Activated CD4-positive, alpha-beta T cell treated with anti-CD3 and anti-CD28 coated beads for 36 hours (primary cell): ENCODE measurements at regions of chr10 and their contacts with region 1.

Region 1: DNA sequence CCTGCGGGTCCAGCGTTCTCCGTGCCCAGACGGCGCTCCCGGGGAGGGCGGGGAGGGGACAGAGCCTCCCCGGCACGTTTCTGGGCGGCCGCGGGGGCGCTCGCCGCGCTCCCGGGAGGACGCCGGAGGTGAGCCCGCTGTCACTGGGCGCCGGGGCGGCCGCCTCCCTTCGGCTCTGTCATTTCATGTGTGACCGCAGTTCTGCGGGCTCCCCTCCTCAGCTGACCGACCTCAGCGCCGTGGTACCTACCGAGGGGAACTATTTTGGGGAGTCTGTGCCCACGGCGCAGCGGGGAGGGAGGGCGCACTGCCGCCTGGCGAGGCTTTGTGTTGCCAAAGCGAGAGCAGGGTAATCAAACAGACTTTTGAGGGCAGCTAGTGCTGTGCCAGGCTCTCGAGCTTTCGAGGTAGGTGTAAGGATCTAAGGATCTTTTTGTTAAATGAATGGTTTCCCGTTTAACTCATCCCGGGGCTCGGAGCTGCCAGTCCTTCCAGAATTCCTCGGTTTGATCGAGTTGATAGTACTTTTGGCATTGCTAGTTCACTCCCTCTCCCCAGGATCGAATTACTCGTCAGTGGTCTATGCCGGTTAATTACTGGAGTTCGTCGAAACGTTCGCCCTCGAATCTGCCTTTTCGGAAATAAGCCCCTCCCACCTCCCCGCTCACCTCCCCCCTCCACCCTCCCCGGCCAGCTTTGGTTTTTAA is 1.9 kb downstream of the ARID5B start:
- DNase-seq: peak; percentile 86
- ATAC-seq: peak; percentile 46
- H3K4me3 Mint-ChIP-seq: peak overlapping the region; percentile 94
- H3K27ac Mint-ChIP-seq: peak overlapping the region; percentile 100
- H3K4me1 Mint-ChIP-seq: peaks cover 40% of the 10 kb centered on the region
- H3K27me3 Mint-ChIP-seq: no peaks in the 10 kb centered on the region

Region 2: DNA sequence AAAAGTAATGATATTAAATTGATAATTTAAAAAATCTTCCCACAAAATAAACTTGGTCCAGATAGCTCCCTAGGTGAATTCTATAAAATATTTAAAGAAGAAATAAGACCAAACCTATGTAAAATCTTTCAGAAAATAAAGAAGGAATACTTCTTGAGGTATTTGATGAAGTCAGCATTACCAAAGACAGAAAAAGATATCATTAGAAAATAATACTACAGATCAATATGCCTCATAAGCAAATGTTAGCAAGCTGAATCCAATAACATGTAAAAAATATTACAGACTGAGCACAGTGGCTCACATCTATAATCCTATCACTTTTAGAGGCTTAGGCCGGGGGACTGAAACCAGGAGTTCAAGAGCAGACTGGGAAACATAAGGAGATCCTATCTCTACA is 480.2 kb before region 1 on chr10:
- CTCF ChIA-PET with region 1: no interaction called
- POLR2A ChIA-PET with region 1: no interaction called
- intact Hi-C with region 1: no loop called
- DNase-seq: no peak
- ATAC-seq: no peak
- H3K4me3 Mint-ChIP-seq: no peak overlapping the region
- H3K27ac Mint-ChIP-seq: no peak overlapping the region
- H3K4me1 Mint-ChIP-seq: no peaks in the 10 kb centered on the region
- H3K27me3 Mint-ChIP-seq: peaks cover 2% of the 10 kb centered on the region

Region 3: DNA sequence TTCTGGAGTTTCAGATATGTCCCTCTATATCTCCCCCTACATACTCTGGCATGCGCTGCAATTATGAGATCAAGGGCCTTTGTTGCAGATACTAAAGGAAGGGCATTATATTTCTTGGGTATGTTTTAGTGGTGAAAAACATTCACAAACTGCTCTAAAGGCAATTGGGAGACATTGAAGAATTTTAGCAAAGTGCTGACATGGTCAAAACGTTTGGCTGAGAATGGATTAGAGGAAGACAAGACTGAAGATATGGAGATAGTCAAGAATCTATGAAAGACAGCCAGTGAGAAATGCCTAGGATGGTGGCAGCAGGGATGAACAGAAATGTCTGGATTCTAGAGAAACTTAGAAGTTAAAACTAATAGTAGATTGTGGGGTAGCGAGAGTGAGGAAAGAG is 345.2 kb before region 1 on chr10:
- CTCF ChIA-PET with region 1: no interaction called
- POLR2A ChIA-PET with region 1: no interaction called
- intact Hi-C with region 1: no loop called
- DNase-seq: no peak
- ATAC-seq: no peak
- H3K4me3 Mint-ChIP-seq: no peak overlapping the region
- H3K27ac Mint-ChIP-seq: no peak overlapping the region
- H3K4me1 Mint-ChIP-seq: no peaks in the 10 kb centered on the region
- H3K27me3 Mint-ChIP-seq: peaks cover 3% of the 10 kb centered on the region

Region 4: DNA sequence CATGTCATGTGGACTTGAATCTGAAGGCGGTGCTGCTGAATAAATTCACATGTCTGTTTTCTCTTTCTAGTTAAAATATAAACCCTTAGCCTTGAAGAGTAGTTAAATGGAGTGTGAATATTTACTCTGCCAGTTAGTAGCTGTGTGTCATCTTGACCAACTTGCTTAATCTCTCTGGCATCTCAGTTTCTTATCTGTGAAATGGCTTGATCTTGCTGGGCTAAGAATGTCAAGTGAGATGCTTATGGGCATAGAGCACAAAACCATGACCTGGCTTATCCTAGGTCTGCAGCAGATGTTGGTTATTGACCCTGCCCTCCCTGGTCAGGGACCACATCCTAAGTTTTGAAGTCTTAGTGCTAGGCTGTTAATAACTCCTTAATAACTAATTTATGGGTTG is 14.8 kb after region 1 on chr10:
- CTCF ChIA-PET with region 1: interaction called, 3 read pairs
- POLR2A ChIA-PET with region 1: no interaction called
- intact Hi-C with region 1: loop called in 1 of 2 experiments (anchors 2 kb)
- DNase-seq: no peak
- ATAC-seq: no peak
- H3K4me3 Mint-ChIP-seq: no peak overlapping the region
- H3K27ac Mint-ChIP-seq: no peak overlapping the region
- H3K4me1 Mint-ChIP-seq: peaks cover 72% of the 10 kb centered on the region
- H3K27me3 Mint-ChIP-seq: no peaks in the 10 kb centered on the region

Region 5: DNA sequence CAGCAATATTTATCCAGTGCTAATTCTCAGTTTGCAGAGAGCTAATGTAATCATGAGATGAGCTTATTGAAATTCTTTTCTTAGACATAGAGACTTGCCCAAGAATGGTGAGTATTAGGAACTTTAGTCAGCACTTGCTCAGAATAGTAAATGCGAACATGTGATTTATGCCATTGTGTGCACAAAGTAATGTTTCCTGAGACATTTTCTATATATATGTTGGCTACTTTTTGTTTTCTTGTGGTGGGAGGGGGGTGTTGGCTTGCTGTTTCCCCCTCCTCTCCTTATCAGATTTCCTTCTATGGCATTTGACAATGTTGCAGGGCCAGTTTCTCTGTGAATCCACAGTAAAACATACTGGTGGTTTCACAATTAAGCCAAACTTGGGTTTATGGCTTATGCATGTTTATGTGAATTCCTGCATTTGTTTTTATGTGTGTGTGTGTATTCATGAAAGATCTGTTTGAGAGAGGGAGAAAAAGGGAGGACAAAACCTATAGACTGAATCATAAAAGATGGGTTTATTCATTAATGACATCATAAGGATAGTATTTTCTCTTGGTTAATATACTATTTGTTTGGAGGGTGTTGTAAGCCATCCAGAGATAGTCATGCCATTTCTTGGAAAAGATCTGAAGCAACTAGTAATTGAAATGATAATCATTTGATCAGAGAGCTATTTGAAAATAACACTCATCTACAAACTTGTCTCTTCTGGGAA is 34.4 kb after region 1 on chr10:
- CTCF ChIA-PET with region 1: interaction called, 10 read pairs
- POLR2A ChIA-PET with region 1: interaction called, 21 read pairs
- intact Hi-C with region 1: loop called (anchors 1 kb)
- DNase-seq: no peak
- ATAC-seq: peak; percentile 62
- H3K4me3 Mint-ChIP-seq: peak overlapping the region; percentile 41
- H3K27ac Mint-ChIP-seq: peak overlapping the region; percentile 92
- H3K4me1 Mint-ChIP-seq: peaks cover 94% of the 10 kb centered on the region
- H3K27me3 Mint-ChIP-seq: no peaks in the 10 kb centered on the region

Region 6: GRCh38 chr10:61964059-61964709 is 60.8 kb after region 1 on chr10:
- CTCF ChIA-PET with region 1: interaction called, 8 read pairs
- POLR2A ChIA-PET with region 1: interaction called, 3 read pairs
- intact Hi-C with region 1: loop called (anchors 2 kb)
- DNase-seq: no peak
- ATAC-seq: no peak
- H3K4me3 Mint-ChIP-seq: no peak overlapping the region
- H3K27ac Mint-ChIP-seq: peak overlapping the region; percentile 73
- H3K4me1 Mint-ChIP-seq: peaks cover 92% of the 10 kb centered on the region
- H3K27me3 Mint-ChIP-seq: no peaks in the 10 kb centered on the region

Region 7: GRCh38 chr10:61992671-61993668 is 89.6 kb after region 1 on chr10:
- CTCF ChIA-PET with region 1: interaction called, 15 read pairs
- POLR2A ChIA-PET with region 1: interaction called, 16 read pairs
- intact Hi-C with region 1: loop called (anchors 1 kb)
- DNase-seq: peak; percentile 74
- ATAC-seq: peak; percentile 50
- H3K4me3 Mint-ChIP-seq: peak overlapping the region; percentile 64
- H3K27ac Mint-ChIP-seq: peak overlapping the region; percentile 95
- H3K4me1 Mint-ChIP-seq: peaks cover 87% of the 10 kb centered on the region
- H3K27me3 Mint-ChIP-seq: no peaks in the 10 kb centered on the region

Region 8: DNA sequence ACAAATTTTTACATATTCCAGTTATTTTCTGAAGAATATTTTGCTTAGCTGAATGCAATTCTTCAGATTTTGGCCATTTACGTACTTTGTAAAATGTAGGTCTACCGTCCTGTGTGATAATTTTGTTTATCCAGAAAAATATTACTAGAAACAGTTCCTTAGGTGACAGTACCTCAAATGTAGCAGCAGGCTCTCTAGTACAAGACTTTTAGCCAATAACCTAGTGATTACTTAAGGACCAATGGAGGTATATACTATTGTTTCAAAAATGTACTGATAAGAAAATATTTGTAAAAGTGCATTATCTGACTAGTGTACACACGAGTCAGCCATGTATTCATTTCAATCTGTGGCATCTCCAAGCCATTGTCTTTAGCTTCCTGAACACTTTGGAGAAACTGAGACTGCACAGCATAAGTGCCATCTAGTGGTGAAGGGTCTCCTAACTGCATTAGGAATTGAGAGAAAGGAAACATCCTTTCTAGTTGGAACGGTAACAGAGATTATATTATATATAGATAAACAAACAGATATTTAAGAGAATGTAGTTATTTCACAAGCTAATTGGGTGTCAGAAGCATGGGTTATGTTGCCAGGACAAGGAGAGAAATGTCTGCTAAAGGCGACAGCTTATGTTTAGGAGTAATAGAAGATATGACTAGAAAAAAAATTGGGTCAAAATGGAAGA is 341.6 kb after region 1 on chr10:
- CTCF ChIA-PET with region 1: interaction called, 5 read pairs
- POLR2A ChIA-PET with region 1: interaction called, 4 read pairs
- intact Hi-C with region 1: loop called in 1 of 2 experiments (anchors 2 kb)
- DNase-seq: peak; percentile 65
- ATAC-seq: peak; percentile 84
- H3K4me3 Mint-ChIP-seq: peak overlapping the region; percentile 36
- H3K27ac Mint-ChIP-seq: peak overlapping the region; percentile 87
- H3K4me1 Mint-ChIP-seq: peaks cover 35% of the 10 kb centered on the region
- H3K27me3 Mint-ChIP-seq: no peaks in the 10 kb centered on the region

Region 9: GRCh38 chr10:63133056-63133820 is 1229.9 kb after region 1 on chr10 and contains the start of gene NRBF2:
- CTCF ChIA-PET with region 1: no interaction called
- POLR2A ChIA-PET with region 1: no interaction called
- intact Hi-C with region 1: loop called in 1 of 2 experiments (anchors 5 kb)
- DNase-seq: peak; percentile 99
- ATAC-seq: peak; percentile 90
- H3K4me3 Mint-ChIP-seq: peak within 1 kb of the TSS; percentile 81
- H3K27ac Mint-ChIP-seq: peak within 1 kb of the TSS; percentile 92
- H3K4me1 Mint-ChIP-seq: peaks cover 46% of the 10 kb centered on the region
- H3K27me3 Mint-ChIP-seq: no peaks in the 10 kb centered on the region
- total RNA-seq, gene NRBF2: 23.9 to 24.1 TPM